ENCODE measurements at regions of chr1 and their contacts with region 1.

Region 1: GRCh38 chr1:7905262-7905661 is 35.4 kb downstream of the TNFRSF9 start:
- DNase-seq: no peak
- ATAC-seq: no peak

Region 2: GRCh38 chr1:7281821-7282220 is 623.4 kb before region 1 on chr1:
- intact Hi-C with region 1: no loop called
- DNase-seq: no peak
- ATAC-seq: no peak

Region 3: DNA sequence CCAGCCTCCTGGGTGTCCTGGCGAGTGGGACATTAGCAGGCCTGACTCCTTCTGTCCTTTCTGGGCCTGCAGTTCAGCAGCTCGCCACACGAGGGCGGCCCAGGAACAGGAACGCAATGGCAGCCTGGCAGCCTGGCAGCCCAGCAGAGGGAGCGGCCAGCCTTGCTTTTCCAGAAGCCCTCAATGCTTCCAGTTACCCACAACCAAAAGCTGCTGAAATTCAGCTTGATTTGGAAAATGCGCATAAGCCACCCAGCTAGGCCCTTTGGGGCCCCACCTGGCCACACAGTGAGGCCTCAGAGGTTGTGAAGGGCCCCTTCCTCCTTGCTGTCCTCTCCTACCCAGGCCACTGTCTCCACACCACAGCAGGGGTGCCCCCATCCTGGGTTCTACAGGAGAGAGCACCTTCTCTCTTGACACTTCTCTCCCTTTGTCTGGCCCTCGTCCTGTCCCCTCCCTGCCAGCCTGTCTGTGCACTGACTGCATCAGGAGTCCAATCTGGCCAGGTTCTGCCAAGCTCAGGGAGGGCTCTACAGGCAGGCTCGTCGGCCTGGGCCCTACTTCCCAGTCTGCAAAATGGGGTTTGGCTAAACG is 237.5 kb before region 1 on chr1:
- intact Hi-C with region 1: loop called (anchors 5 kb)
- DNase-seq: peak; percentile 95
- ATAC-seq: peak; percentile 90

Measured in Right ventricle myocardium superior (tissue), 1 donor.